ENCODE measurements at regions of chr19 and their contacts with region 1.

Region 1: GRCh38 chr19:39765091-39766076 is 13.3 kb upstream of the LEUTX start:
- DNase-seq: peak in 4 of 9 donors; percentile 4 to 33 (median 11)
- ATAC-seq: no peak
- H3K4me3 ChIP-seq: no peak overlapping the region
- H3K4me3 Mint-ChIP-seq: peak overlapping the region in 1 of 10 donors; percentile 14
- H3K27ac ChIP-seq: no peak overlapping the region
- H3K27ac Mint-ChIP-seq: peak overlapping the region in 1 of 9 donors; percentile 14
- H3K4me1 ChIP-seq: no peaks in the 10 kb centered on the region
- H3K4me1 Mint-ChIP-seq: peaks cover 0 to 4% (median 0%) of the 10 kb centered on the region in 7 donors
- H3K27me3 ChIP-seq: no peaks in the 10 kb centered on the region
- H3K27me3 Mint-ChIP-seq: peaks cover 0 to 15% (median 4%) of the 10 kb centered on the region in 5 donors

Region 2: DNA sequence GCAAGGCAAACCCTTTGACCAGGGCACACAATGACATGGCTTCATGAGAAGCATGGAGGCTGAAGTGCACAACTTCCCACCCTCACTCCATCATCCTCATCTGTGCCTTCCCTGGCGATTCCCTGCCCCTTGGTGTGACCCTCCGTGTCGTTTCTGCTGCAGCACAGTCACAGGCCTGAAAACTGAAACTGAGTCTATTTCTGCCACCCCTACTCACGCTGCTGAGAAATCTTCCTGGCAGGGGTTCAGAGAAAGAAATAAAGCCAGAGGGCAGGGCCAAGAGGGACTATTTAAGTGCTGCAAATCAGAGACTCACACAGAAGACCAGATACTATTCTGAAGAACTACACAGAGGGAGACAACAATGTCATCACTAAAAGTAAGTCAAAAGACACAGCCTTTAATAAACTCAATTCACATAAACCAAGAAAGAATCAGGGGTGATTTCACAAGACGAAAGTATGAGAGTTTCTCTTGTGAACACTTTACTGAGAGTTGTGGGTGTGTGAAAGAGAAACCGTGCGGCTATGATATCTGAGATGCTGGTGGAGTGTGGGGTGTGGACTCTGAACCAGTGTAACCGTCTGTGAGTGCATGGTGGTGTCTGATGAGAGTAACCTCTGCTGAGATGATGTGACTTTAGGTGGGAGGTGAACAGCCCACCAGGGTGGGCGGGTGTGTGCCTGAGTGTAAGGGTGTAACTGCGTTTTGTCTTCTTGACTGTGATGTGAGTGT is 86.2 kb before region 1 on chr19:
- CTCF ChIA-PET with region 1: interaction called, 11 read pairs
- POLR2A ChIA-PET with region 1: no interaction called
- intact Hi-C with region 1: loop called (anchors 1 to 5 kb)
- DNase-seq: peak in 4 of 9 donors; percentile 18 to 59 (median 24)
- ATAC-seq: peak; percentile 73
- H3K4me3 ChIP-seq: peak overlapping the region; percentile 43
- H3K4me3 Mint-ChIP-seq: peak overlapping the region; percentile 80 to 92 (median 84)
- H3K27ac ChIP-seq: peak overlapping the region; percentile 50
- H3K27ac Mint-ChIP-seq: peak overlapping the region; percentile 83 to 97 (median 92)
- H3K4me1 ChIP-seq: peaks cover 15 to 32% of the 10 kb centered on the region in 2 donors
- H3K4me1 Mint-ChIP-seq: peaks cover 22 to 61% (median 46%) of the 10 kb centered on the region in 7 donors
- H3K27me3 ChIP-seq: no peaks in the 10 kb centered on the region
- H3K27me3 Mint-ChIP-seq: no peaks in the 10 kb centered on the region

Region 3: GRCh38 chr19:39927524-39928356 is 162.4 kb after region 1 on chr19:
- CTCF ChIA-PET with region 1: no interaction called
- POLR2A ChIA-PET with region 1: no interaction called
- intact Hi-C with region 1: no loop called
- DNase-seq: no peak
- ATAC-seq: no peak
- H3K4me3 ChIP-seq: no peak overlapping the region
- H3K4me3 Mint-ChIP-seq: peak overlapping the region in 4 of 10 donors; percentile 5 to 39 (median 16)
- H3K27ac ChIP-seq: no peak overlapping the region
- H3K27ac Mint-ChIP-seq: peak overlapping the region in 5 of 9 donors; percentile 2 to 63 (median 39)
- H3K4me1 ChIP-seq: peaks cover 0 to 8% of the 10 kb centered on the region in 2 donors
- H3K4me1 Mint-ChIP-seq: peaks cover 6 to 47% (median 36%) of the 10 kb centered on the region in 7 donors
- H3K27me3 ChIP-seq: no peaks in the 10 kb centered on the region
- H3K27me3 Mint-ChIP-seq: peaks cover 0 to 3% (median 0%) of the 10 kb centered on the region in 5 donors

Region 4: DNA sequence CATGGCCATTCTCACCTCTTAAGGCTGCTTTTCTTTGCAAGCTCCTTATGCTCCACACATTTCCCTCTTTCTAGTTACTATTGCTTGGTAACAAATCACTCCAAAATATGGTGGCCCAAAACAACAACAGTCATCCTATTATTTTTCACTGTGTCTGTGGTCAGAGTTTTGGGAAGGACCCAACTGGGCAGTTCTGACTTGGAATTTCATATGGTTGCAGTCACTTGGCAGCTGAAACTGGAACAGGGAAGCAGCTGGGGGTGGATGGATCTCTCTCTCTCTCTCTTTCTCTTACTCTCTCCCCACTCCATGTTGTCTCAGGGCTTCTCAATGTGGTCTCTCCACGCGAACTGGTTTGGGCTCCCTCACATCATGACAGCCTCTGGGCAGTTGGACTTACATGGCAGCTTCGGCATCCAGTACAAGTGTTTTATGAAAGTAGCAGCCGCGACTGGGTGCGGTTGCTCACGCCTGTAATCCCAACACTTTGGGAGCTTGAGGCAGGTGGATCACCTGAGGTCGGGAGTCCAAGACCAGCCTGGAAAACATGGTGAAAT is 885.4 kb after region 1 on chr19:
- CTCF ChIA-PET with region 1: no interaction called
- POLR2A ChIA-PET with region 1: no interaction called
- intact Hi-C with region 1: no loop called
- DNase-seq: no peak
- ATAC-seq: no peak
- H3K4me3 ChIP-seq: no peak overlapping the region
- H3K4me3 Mint-ChIP-seq: no peak overlapping the region
- H3K27ac ChIP-seq: no peak overlapping the region
- H3K27ac Mint-ChIP-seq: no peak overlapping the region
- H3K4me1 ChIP-seq: no peaks in the 10 kb centered on the region
- H3K4me1 Mint-ChIP-seq: no peaks in the 10 kb centered on the region
- H3K27me3 ChIP-seq: no peaks in the 10 kb centered on the region
- H3K27me3 Mint-ChIP-seq: peaks cover 0 to 10% (median 6%) of the 10 kb centered on the region in 5 donors